Activated T-helper 2 cell treated with anti-CD3 and anti-CD28 coated beads, Interferon-gamma antibody, Interleukin-2, Interleukin-4, amounts not matched to agents 10 μg/mL and 5 μg/mL and 100 μg/mL, durations not matched to agents 14 hours and 24 hours and 36 hours (primary cell): ENCODE measurements at regions of chr6 and their contacts with region 1.

Region 1: DNA sequence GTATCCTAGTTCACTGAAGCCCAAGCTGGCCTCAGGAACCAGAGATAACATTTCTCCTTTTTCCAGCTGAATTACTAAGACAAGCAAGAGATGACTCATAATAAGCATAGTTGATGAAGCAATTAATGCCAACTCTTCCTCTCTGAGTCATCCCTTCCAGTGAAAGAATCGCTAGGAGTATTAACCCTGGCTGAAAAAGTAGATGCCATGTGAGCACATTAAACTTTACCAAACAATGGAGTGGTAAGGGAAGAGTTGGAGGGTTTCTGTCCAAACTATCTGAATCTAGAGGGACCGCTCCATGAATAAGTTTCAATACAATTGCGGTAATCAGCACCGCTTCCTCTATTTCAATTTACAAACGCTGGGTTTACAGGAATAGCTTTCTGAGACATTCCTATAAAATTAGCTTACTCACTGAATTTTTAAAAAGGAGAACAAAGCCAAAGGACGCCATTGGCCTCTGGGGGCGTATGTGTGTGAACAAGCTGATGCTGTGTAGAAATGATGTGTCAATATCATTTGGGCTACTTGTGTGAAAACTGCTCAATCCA is 48.3 kb downstream of the ATXN1 start:
- DNase-seq: no peak
- H3K4me3 Mint-ChIP-seq: peak overlapping the region; percentile 62
- H3K27ac Mint-ChIP-seq: peak overlapping the region; percentile 91
- H3K4me1 Mint-ChIP-seq: peaks cover 66% of the 10 kb centered on the region
- H3K27me3 Mint-ChIP-seq: no peaks in the 10 kb centered on the region

Region 2: GRCh38 chr6:16670183-16670582 is 42.8 kb before region 1 on chr6:
- intact Hi-C with region 1: loop called (anchors 5 kb)
- DNase-seq: no peak
- H3K4me3 Mint-ChIP-seq: peak overlapping the region; percentile 50
- H3K27ac Mint-ChIP-seq: peak overlapping the region; percentile 89
- H3K4me1 Mint-ChIP-seq: peaks cover 74% of the 10 kb centered on the region
- H3K27me3 Mint-ChIP-seq: no peaks in the 10 kb centered on the region

Region 3: GRCh38 chr6:16698997-16699868 is 13.8 kb before region 1 on chr6:
- intact Hi-C with region 1: loop called (anchors 1 kb)
- DNase-seq: no peak
- H3K4me3 Mint-ChIP-seq: peak overlapping the region; percentile 80
- H3K27ac Mint-ChIP-seq: peak overlapping the region; percentile 95
- H3K4me1 Mint-ChIP-seq: peaks cover 73% of the 10 kb centered on the region
- H3K27me3 Mint-ChIP-seq: no peaks in the 10 kb centered on the region

Region 4: DNA sequence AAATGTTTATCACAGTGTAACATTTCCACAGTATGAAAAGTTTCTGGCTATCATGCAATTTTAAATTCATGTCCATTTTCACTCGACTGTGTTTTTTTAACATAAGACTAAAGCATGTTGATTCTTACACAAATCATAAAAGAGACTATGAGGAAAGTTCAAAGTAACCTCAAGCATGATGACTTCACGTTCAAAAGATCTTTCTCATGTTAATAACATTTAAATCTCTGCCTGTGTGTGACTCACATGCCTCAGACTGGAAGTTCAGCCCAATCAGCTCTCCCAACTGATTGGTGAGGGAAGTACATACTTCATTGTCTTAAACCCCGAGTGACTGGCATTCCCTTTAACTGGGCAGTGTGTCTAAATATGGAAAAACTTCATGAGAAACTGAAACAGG is 10.8 kb after region 1 on chr6:
- intact Hi-C with region 1: loop called (anchors 1 kb)
- DNase-seq: no peak
- H3K4me3 Mint-ChIP-seq: no peak overlapping the region
- H3K27ac Mint-ChIP-seq: peak overlapping the region; percentile 60
- H3K4me1 Mint-ChIP-seq: peaks cover 49% of the 10 kb centered on the region
- H3K27me3 Mint-ChIP-seq: no peaks in the 10 kb centered on the region

Region 5: GRCh38 chr6:16731478-16732051 is 18.6 kb after region 1 on chr6:
- intact Hi-C with region 1: loop called (anchors 1 kb)
- DNase-seq: peak; percentile 48
- H3K4me3 Mint-ChIP-seq: peak overlapping the region; percentile 65
- H3K27ac Mint-ChIP-seq: peak overlapping the region; percentile 91
- H3K4me1 Mint-ChIP-seq: peaks cover 60% of the 10 kb centered on the region
- H3K27me3 Mint-ChIP-seq: no peaks in the 10 kb centered on the region

Region 6: DNA sequence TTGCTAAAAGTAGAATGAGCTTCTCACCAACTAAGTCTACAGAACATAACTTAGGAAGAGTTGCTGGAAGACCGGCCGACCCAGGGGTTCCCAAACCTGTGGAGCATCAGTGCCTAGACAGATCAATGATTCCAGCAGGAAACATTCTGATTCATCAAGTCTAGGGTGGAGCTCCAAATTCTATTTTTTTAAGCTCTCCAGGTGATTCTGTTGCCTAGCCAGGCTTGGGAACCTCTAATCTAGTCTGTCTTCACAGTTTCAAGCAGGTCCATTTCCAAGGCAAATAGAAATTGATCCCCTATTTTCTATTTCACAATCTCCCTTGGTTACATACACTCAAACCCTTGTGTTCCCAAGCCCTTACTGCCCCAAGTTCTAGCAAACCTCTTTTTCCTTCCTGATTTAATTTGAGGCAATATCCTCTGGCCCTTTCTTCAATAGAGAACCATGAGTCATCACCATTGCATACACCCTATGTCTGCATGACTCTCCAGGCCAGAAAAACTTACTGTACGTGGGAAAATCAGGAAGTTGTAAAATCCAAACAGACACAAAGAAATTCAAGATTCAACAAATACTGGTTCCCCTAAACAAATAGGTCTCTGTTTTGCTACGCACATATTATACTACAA is 39.3 kb after region 1 on chr6:
- intact Hi-C with region 1: no loop called
- DNase-seq: no peak
- H3K4me3 Mint-ChIP-seq: no peak overlapping the region
- H3K27ac Mint-ChIP-seq: no peak overlapping the region
- H3K4me1 Mint-ChIP-seq: peaks cover 64% of the 10 kb centered on the region
- H3K27me3 Mint-ChIP-seq: no peaks in the 10 kb centered on the region